Naive thymus-derived CD4-positive, alpha-beta T cell (primary cell): ENCODE measurements at regions of chr3 and their contacts with region 1.

Region 1: GRCh38 chr3:15578289-15578867 is 23.0 kb downstream of the HACL1 start:
- DNase-seq: no peak
- ATAC-seq: no peak
- H3K4me3 ChIP-seq: no peak overlapping the region
- H3K4me3 Mint-ChIP-seq: no peak overlapping the region
- H3K27ac ChIP-seq: no peak overlapping the region
- H3K27ac Mint-ChIP-seq: peak overlapping the region in 1 of 9 donors; percentile 87
- H3K4me1 ChIP-seq: no peaks in the 10 kb centered on the region
- H3K4me1 Mint-ChIP-seq: peaks cover 0 to 10% (median 0%) of the 10 kb centered on the region in 7 donors
- H3K27me3 ChIP-seq: no peaks in the 10 kb centered on the region
- H3K27me3 Mint-ChIP-seq: no peaks in the 10 kb centered on the region

Region 2: DNA sequence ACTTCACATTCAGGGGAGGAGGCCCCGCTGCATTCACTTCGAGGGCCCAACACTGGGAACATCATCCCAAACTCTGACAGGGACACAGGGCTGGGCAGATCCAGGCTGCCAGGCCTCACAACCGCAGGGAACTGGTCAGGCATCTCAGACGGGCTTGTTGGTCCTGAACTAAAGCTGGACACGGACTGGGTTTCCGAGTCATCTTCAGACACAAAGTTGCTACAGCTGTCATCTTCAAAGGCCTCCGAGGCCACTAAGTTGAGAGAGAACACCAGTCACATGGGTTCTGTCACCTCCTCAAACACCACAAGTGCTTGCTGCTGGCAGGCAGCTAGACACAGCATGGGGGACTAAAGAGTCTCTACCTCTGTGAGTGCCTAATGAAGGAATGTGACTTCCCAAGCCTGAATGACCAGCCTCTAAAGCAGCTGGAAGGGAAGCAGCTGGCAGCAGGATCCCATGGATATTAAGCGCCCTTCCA is 321.5 kb before region 1 on chr3:
- CTCF ChIA-PET with region 1: no interaction called
- POLR2A ChIA-PET with region 1: no interaction called
- intact Hi-C with region 1: loop called in 1 of 2 experiments (anchors 10 kb)
- DNase-seq: no peak
- ATAC-seq: no peak
- H3K4me3 ChIP-seq: no peak overlapping the region
- H3K4me3 Mint-ChIP-seq: no peak overlapping the region
- H3K27ac ChIP-seq: no peak overlapping the region
- H3K27ac Mint-ChIP-seq: peak overlapping the region in 8 of 9 donors; percentile 8 to 86 (median 62)
- H3K4me1 ChIP-seq: no peaks in the 10 kb centered on the region
- H3K4me1 Mint-ChIP-seq: peaks cover 0 to 14% (median 6%) of the 10 kb centered on the region in 7 donors
- H3K27me3 ChIP-seq: no peaks in the 10 kb centered on the region
- H3K27me3 Mint-ChIP-seq: no peaks in the 10 kb centered on the region